Ascending aorta (tissue), 2 donors: ENCODE measurements at regions of chr9 and their contacts with region 1.

Region 1: GRCh38 chr9:19230356-19231125 is at the start of gene DENND4C:
- DNase-seq: peak; percentile 44 to 90
- H3K4me3 ChIP-seq: peak within 1 kb of the TSS; percentile 90 to 92
- H3K27ac ChIP-seq: peak within 1 kb of the TSS; percentile 97 to 98
- H3K4me1 ChIP-seq: peaks cover 0 to 18% of the 10 kb centered on the region in 2 donors
- H3K27me3 ChIP-seq: no peaks in the 10 kb centered on the region
- CTCF ChIP-seq: no peak
- total RNA-seq, gene DENND4C: 41.5 TPM

Region 2: GRCh38 chr9:19022206-19022605 is 208.3 kb before region 1 on chr9:
- intact Hi-C with region 1: no loop called
- DNase-seq: no peak
- H3K4me3 ChIP-seq: no peak overlapping the region
- H3K27ac ChIP-seq: no peak overlapping the region
- H3K4me1 ChIP-seq: no peaks in the 10 kb centered on the region
- H3K27me3 ChIP-seq: no peaks in the 10 kb centered on the region
- CTCF ChIP-seq: no peak

Region 3: DNA sequence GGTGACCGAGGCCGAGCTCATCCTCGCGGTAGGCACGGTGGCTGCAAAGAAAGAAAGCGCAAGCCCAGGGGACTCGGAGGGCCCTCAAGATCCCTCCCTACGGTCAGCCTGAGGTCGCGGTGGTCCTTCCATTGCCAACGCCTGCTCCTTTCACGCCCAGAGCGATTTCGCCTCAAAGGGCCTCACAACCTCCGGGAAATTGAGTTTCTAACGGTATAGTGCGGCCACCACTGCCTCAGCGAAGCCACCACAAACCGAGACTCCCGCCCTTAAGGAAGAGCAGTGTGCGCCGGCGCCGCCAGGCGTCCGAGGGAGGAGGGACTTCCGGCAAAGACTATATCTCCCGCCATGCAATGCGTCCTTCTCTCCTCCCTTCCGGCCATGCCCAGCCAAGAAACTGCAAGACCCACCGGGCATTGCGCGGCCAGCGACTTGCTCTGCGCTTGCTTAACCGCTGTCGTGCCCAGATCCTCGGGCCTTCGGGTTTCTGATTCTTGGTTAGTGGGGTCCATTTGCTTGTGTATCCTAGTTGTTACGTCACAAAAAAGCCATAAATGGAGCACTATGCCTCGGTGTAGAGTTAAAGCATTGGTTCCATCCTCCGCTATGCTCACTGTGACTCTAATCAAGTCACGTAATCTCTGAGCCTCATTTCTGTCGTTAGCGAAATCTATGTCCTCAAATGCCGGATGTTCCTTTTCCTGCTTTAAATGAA is 127.8 kb before region 1 on chr9 and contains the start of gene HAUS6:
- intact Hi-C with region 1: loop called (anchors 2 kb)
- DNase-seq: peak; percentile 83 to 99
- H3K4me3 ChIP-seq: peak within 1 kb of the TSS; percentile 67 to 74
- H3K27ac ChIP-seq: peak within 1 kb of the TSS; percentile 85 to 87
- H3K4me1 ChIP-seq: peaks cover 10 to 11% of the 10 kb centered on the region in 2 donors
- H3K27me3 ChIP-seq: no peaks in the 10 kb centered on the region
- CTCF ChIP-seq: peak in 2 of 3 experiments; percentile 41 to 69
- total RNA-seq, gene HAUS6: 3.4 TPM

Region 4: DNA sequence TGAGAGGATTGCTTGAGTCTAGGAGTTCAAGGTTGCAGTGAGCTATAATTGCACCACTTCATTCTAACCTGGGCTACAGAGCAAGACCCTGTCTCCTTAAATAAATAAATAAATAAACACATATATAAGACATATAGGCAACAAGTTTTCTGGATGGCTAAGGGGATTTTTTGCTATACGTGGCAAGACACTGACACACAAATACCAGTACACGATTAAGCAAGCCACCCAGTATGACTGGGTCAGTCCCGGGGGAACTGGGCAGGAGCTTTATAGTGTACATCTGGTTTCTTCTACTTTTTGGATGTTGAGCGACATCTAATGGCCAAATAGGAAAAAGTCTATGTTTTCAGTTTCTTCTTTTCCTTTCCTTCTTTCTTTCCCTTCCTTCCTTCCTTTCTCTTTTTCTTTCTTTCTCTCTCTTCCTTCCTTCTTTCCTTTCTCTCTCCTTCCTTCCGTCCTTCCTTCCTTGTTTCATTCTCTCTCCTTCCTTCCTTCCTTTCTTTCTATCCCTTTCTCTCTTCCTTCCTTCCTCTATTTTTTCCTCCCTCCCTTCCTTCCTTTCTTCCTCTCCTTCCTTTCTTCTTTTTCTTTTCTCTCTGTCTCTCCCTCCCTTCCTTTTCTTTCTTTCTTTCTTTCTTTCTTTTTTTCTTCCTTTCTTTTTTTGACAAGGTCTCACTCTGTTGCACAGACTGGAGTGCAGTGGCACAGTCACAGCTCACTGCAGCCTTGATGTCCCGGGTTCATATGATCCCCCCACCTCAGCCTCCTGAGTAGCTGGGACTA is 56.2 kb before region 1 on chr9:
- intact Hi-C with region 1: loop called (anchors 1 kb)
- DNase-seq: peak; percentile 51 to 92
- H3K4me3 ChIP-seq: no peak overlapping the region
- H3K27ac ChIP-seq: no peak overlapping the region
- H3K4me1 ChIP-seq: peaks cover 0 to 4% of the 10 kb centered on the region in 2 donors
- H3K27me3 ChIP-seq: no peaks in the 10 kb centered on the region
- CTCF ChIP-seq: peak; percentile 54 to 63 (median 61)

Region 5: GRCh38 chr9:19286634-19287200 is 56.2 kb after region 1 on chr9:
- intact Hi-C with region 1: loop called (anchors 10 kb)
- DNase-seq: no peak
- H3K4me3 ChIP-seq: no peak overlapping the region
- H3K27ac ChIP-seq: no peak overlapping the region
- H3K4me1 ChIP-seq: peaks cover 0 to 3% of the 10 kb centered on the region in 2 donors
- H3K27me3 ChIP-seq: no peaks in the 10 kb centered on the region
- CTCF ChIP-seq: no peak

Region 6: GRCh38 chr9:19456996-19457692 is 226.6 kb after region 1 on chr9:
- intact Hi-C with region 1: loop called (anchors 5 kb)
- DNase-seq: peak in 1 of 2 donors; percentile 86
- H3K4me3 ChIP-seq: peak overlapping the region in 1 of 2 donors; percentile 38
- H3K27ac ChIP-seq: peak overlapping the region; percentile 68 to 76
- H3K4me1 ChIP-seq: peaks cover 4 to 6% of the 10 kb centered on the region in 2 donors
- H3K27me3 ChIP-seq: no peaks in the 10 kb centered on the region
- CTCF ChIP-seq: peak; percentile 90 to 94 (median 92)